Right ventricle myocardium superior (tissue), 1 donor: ENCODE measurements at regions of chr9 and their contacts with region 1.

Region 1: GRCh38 chr9:13688994-13689600 is 409.6 kb upstream of the MPDZ start:
- DNase-seq: no peak
- ATAC-seq: peak; percentile 21

Region 2: GRCh38 chr9:13437866-13438265 is 251.2 kb before region 1 on chr9:
- intact Hi-C with region 1: loop called (anchors 5 kb)
- DNase-seq: no peak
- ATAC-seq: peak; percentile 31

Region 3: DNA sequence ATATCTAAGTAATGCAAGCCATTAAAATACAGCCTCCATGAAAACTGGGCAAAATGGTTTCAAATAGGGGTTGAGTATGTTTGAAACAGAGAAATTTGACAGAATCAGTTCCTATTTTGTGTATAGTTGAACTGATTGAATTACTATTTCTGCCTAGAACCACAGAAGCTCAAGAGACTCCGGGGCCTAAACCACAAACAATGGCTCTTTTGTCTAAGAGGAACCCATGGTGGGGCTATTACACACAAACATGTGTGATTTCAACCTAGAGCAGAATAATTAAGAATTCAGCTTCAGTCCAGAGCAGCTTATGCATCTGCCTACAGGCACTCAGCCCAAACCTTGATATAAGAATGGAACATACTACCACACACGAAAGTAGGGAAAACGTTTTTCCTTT is 238.4 kb before region 1 on chr9:
- intact Hi-C with region 1: no loop called
- DNase-seq: no peak
- ATAC-seq: peak; percentile 19